Left cardiac atrium (tissue), 4 donors: ENCODE measurements at regions of chr2 and their contacts with region 1.

Region 1: GRCh38 chr2:239035361-239036078 is 187.6 kb downstream of the TWIST2 start:
- DNase-seq: peak; percentile 56
- ATAC-seq: peak; percentile 67 to 89

Region 2: DNA sequence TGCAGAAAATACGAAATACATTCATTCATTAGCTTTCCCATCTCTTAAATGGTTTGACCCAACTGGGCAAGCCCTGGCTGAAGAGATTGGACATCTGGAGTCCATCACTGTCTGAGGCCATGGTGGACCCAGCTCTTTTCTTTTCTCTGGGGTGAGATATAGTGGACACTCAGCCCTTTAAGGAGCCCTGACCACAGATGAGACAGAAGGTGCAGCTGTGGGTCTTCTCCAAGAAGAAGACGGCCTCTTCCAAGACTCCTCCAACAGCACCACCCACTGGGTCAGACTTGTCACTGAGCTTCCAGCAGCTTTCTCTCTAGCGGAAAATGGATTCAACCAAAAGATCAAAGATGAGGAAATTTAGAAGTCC is 160.4 kb before region 1 on chr2:
- intact Hi-C with region 1: no loop called
- DNase-seq: no peak
- ATAC-seq: no peak

Region 3: GRCh38 chr2:239106314-239106908 is 70.9 kb after region 1 on chr2:
- intact Hi-C with region 1: loop called (anchors 5 kb)
- DNase-seq: no peak
- ATAC-seq: peak; percentile 43 to 62

Region 4: DNA sequence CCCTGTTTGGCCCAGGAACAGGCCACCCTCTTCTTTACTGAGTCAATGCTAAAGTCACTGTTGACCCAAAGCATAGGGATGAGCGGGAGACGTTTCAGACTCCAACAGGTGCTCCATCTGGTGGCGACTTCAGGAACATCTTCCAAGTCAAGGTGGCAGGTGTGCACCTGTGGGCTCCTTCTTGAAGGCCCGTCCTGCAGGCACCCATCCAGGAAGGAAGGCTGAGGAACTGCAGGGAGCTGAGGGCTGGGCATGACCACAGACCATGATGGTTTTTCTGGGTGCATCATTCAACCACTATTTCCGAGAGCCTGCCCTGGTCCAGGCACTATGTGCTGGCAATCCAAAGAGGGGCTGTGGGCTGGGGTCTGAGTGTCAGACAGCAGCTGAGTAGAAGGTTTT is 846.8 kb after region 1 on chr2:
- intact Hi-C with region 1: loop called (anchors 5 to 10 kb)
- DNase-seq: peak; percentile 48
- ATAC-seq: peak; percentile 76 to 77